Aorta (tissue), 5 donors: ENCODE measurements at regions of chrX and their contacts with region 1.

Region 1: GRCh38 chrX:130039847-130040246 is 57.4 kb downstream of the BCORL1 start:
- DNase-seq: no peak
- ATAC-seq: no peak
- H3K4me3 ChIP-seq: no peak overlapping the region
- H3K27ac ChIP-seq: no peak overlapping the region
- H3K4me1 ChIP-seq: no peaks in the 10 kb centered on the region
- H3K27me3 ChIP-seq: no peaks in the 10 kb centered on the region

Region 2: GRCh38 chrX:129769467-129770353 is 270.1 kb before region 1 on chrX:
- intact Hi-C with region 1: no loop called
- DNase-seq: no peak
- ATAC-seq: no peak
- H3K4me3 ChIP-seq: no peak overlapping the region
- H3K27ac ChIP-seq: no peak overlapping the region
- H3K4me1 ChIP-seq: no peaks in the 10 kb centered on the region
- H3K27me3 ChIP-seq: no peaks in the 10 kb centered on the region

Region 3: GRCh38 chrX:129798888-129799287 is 241.0 kb before region 1 on chrX:
- intact Hi-C with region 1: no loop called
- DNase-seq: no peak
- ATAC-seq: no peak
- H3K4me3 ChIP-seq: no peak overlapping the region
- H3K27ac ChIP-seq: no peak overlapping the region
- H3K4me1 ChIP-seq: no peaks in the 10 kb centered on the region
- H3K27me3 ChIP-seq: no peaks in the 10 kb centered on the region

Region 4: DNA sequence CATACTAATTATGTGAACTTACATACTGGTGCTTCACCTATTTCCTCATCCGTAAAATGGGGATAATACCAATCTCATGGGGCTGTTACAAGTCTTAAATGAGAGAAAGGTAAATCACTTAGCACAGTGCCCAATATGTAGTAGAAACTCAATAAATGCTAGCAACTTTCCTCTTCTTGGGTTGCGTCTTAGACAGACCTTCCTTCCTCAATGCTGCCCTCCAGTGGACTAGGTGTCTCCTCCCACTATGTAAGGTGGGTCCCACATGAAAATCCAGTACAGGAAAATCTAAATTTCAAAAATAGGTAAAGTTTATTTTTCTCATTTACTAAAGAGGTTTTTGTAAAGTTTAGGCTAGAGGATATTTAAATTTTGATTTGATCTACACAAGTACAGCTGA is 216.7 kb before region 1 on chrX:
- intact Hi-C with region 1: no loop called
- DNase-seq: peak in 1 of 2 donors; percentile 59
- ATAC-seq: peak; percentile 71
- H3K4me3 ChIP-seq: no peak overlapping the region
- H3K27ac ChIP-seq: no peak overlapping the region
- H3K4me1 ChIP-seq: no peaks in the 10 kb centered on the region
- H3K27me3 ChIP-seq: no peaks in the 10 kb centered on the region

Region 5: GRCh38 chrX:129843459-129844306 is 196.2 kb before region 1 on chrX and contains the start of gene ZDHHC9:
- intact Hi-C with region 1: loop called in 1 of 2 experiments (anchors 10 kb)
- DNase-seq: peak; percentile 91 to 95
- ATAC-seq: peak; percentile 94
- H3K4me3 ChIP-seq: peak within 1 kb of the TSS; percentile 49 to 59
- H3K27ac ChIP-seq: peak within 1 kb of the TSS in 1 of 2 donors; percentile 77
- H3K4me1 ChIP-seq: no peaks in the 10 kb centered on the region
- H3K27me3 ChIP-seq: no peaks in the 10 kb centered on the region
- total RNA-seq, gene ZDHHC9: 21.3 to 24.0 TPM